HEK293 (cell line): ENCODE measurements at regions of chr6 and their contacts with region 1.

Region 1: GRCh38 chr6:29752451-29753308 is 29.4 kb downstream of the HLA-F start:
- H3K4me3 ChIP-seq: peak overlapping the region; percentile 75
- H3K27ac ChIP-seq: peak overlapping the region; percentile 46; the same call in 1 of the 2 replicates
- H3K4me1 ChIP-seq: peaks cover 5% of the 10 kb centered on the region; the same call in 1 of the 2 replicates
- CTCF ChIP-seq: peak; percentile 99

Region 2: DNA sequence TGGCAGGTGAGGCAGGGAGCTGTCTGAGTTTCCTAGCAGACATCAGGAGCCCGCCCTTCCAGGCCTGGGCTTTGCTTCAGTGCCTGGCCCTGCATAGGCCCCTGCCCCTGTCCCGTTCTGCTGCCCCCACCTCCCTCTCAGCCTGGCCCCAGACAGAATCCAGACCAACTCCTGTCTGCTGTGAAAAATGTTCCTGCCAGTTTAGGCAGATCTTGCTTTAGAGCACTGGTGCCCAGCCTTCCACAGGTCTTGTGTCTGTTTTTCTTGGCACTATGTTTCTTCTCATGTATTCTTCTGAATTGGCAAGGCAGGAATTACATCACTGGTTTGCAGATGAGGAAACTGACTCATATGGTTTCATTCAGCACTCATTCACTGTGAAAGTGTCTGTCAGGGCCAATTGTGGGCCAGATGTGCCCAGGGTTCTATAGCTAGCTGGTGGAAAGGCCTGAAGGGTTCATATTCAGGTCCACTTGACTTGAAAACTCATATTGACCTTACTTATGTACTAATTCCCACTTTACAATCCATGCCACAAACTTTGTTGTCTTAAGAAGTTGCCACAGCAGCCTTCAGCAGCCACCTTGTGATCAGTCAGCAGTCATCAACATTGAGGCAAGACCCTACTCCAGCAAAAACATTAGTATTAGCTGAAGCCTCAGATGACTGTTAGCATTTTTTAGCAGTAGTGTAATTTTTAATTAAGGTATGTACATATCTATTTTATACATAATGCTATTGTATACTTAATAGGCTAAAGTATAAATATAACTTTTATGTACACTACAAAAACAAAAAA is 11.0 kb after region 1 on chr6:
- CTCF ChIA-PET with region 1: interaction called, 20 read pairs
- POLR2A ChIA-PET with region 1: interaction called, 11 read pairs
- H3K4me3 ChIP-seq: no peak overlapping the region
- H3K27ac ChIP-seq: no peak overlapping the region
- H3K4me1 ChIP-seq: no peaks in the 10 kb centered on the region
- CTCF ChIP-seq: no peak

Region 3: GRCh38 chr6:29769336-29769735 is 16.7 kb after region 1 on chr6:
- CTCF ChIA-PET with region 1: interaction called, 20 read pairs
- POLR2A ChIA-PET with region 1: interaction called, 4 read pairs
- H3K4me3 ChIP-seq: no peak overlapping the region
- H3K27ac ChIP-seq: no peak overlapping the region
- H3K4me1 ChIP-seq: no peaks in the 10 kb centered on the region
- CTCF ChIP-seq: no peak

Region 4: DNA sequence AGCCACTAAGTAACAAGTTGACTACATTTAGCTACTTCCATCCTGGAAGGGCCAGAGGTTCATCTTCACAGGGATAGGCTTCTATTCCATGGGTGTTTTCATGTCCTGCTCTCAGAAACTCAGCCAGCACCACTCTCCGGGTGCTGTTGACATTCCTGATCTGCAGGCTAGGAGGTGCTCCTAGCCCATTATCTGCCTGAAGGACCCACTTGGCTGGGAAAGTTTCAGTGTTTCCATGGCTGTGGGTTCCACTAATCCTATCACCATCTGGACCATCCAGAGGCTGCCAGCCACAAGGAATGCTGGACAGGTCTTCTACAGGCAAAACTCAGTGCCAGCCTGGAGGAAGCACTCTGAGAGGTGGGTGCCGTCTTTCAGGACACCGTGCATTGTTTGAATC is 120.1 kb after region 1 on chr6:
- CTCF ChIA-PET with region 1: no interaction called
- POLR2A ChIA-PET with region 1: no interaction called
- H3K4me3 ChIP-seq: no peak overlapping the region
- H3K27ac ChIP-seq: no peak overlapping the region
- H3K4me1 ChIP-seq: no peaks in the 10 kb centered on the region
- CTCF ChIP-seq: no peak

Region 5: GRCh38 chr6:29887819-29888776 is 135.4 kb after region 1 on chr6:
- CTCF ChIA-PET with region 1: no interaction called
- POLR2A ChIA-PET with region 1: no interaction called
- H3K4me3 ChIP-seq: peak overlapping the region; percentile 40
- H3K27ac ChIP-seq: no peak overlapping the region
- H3K4me1 ChIP-seq: no peaks in the 10 kb centered on the region
- CTCF ChIP-seq: no peak